Naive thymus-derived CD4-positive, alpha-beta T cell (primary cell): ENCODE measurements at regions of chr1 and their contacts with region 1.

Region 1: DNA sequence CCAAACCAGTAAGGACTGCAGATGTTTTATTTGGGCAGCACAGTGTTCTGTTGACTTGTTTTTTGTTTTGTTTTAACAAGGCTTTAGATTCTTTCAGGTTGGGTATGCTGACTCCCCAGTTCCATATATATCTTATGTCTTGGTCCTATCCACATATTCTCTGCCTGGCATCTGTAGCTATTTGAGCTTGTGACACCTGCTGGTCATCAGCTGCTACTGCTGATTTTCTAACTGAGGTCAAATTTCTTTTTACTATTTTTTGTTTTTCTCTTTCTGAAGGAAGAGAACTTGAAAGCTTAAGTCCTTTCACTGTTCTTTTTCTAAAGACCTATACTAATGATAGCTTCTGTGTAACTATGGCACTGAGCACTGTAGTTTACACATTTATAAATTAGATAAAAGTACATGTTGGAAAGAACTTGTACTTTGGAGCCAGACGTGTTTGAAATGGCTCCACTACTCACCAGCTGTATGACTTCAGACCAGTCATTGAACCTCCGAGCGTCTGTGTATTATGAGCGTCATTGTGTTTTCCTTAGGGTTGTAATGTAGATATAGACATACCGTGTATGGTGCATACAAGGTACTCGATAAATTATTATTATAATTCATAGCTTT is 109.4 kb downstream of the NRDC start:
- DNase-seq: peak in 7 of 9 donors; percentile 10 to 52 (median 33)
- ATAC-seq: peak; percentile 83
- H3K4me3 ChIP-seq: no peak overlapping the region
- H3K4me3 Mint-ChIP-seq: no peak overlapping the region
- H3K27ac ChIP-seq: no peak overlapping the region
- H3K27ac Mint-ChIP-seq: peak overlapping the region in 4 of 9 donors; percentile 18 to 65 (median 52)
- H3K4me1 ChIP-seq: no peaks in the 10 kb centered on the region
- H3K4me1 Mint-ChIP-seq: peaks cover 3 to 18% (median 6%) of the 10 kb centered on the region in 7 donors
- H3K27me3 ChIP-seq: no peaks in the 10 kb centered on the region
- H3K27me3 Mint-ChIP-seq: no peaks in the 10 kb centered on the region

Region 2: DNA sequence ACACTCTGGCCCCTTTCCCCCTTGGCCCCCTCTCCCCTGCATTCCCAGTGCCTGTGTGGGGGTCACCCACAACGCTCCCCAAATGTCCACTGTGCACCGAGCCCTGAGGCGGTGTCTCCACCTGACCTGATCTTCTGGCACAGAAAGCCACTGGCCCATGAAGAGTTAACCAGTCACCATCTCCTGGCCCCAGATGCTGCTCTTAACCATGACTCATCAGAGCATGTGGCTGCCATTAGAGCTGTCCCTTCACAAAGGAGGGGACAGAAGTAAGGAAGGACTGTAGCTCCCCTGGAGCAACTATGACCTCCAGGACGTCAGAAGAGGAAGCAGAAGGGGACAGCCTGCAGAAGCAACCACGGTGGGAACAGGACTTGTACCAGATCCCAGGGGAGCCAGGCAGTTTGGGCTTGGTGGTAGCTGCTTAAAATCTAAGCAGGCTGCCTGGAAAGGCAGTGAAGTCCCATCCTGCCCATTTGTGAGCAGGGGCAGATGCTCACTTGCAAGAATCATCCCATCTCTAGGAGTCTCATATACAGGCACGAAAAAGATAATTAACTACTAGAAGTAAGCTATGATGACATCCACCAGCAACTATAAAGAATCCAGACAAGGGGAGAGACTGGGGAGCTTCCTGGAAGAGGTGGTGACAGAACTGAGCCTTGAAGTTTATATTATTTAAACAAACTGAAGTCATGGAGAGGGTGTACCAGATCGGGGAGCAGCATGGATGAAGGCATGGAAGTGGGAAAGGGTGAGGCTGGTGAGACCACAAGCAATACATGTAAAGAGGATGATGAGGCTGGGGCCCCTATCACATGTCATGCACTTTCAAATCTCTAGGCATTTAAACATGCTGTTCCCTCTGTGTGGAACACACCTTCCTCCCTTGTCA is 437.6 kb before region 1 on chr1:
- CTCF ChIA-PET with region 1: no interaction called
- POLR2A ChIA-PET with region 1: no interaction called
- intact Hi-C with region 1: loop called in 1 of 2 experiments (anchors 10 kb)
- DNase-seq: no peak
- ATAC-seq: peak; percentile 68
- H3K4me3 ChIP-seq: no peak overlapping the region
- H3K4me3 Mint-ChIP-seq: peak overlapping the region; percentile 31 to 85 (median 66)
- H3K27ac ChIP-seq: no peak overlapping the region
- H3K27ac Mint-ChIP-seq: no peak overlapping the region
- H3K4me1 ChIP-seq: no peaks in the 10 kb centered on the region
- H3K4me1 Mint-ChIP-seq: peaks cover 0 to 9% (median 5%) of the 10 kb centered on the region in 7 donors
- H3K27me3 ChIP-seq: peaks cover 5 to 11% of the 10 kb centered on the region in 2 donors
- H3K27me3 Mint-ChIP-seq: peaks cover 23 to 37% (median 30%) of the 10 kb centered on the region in 5 donors

Region 3: DNA sequence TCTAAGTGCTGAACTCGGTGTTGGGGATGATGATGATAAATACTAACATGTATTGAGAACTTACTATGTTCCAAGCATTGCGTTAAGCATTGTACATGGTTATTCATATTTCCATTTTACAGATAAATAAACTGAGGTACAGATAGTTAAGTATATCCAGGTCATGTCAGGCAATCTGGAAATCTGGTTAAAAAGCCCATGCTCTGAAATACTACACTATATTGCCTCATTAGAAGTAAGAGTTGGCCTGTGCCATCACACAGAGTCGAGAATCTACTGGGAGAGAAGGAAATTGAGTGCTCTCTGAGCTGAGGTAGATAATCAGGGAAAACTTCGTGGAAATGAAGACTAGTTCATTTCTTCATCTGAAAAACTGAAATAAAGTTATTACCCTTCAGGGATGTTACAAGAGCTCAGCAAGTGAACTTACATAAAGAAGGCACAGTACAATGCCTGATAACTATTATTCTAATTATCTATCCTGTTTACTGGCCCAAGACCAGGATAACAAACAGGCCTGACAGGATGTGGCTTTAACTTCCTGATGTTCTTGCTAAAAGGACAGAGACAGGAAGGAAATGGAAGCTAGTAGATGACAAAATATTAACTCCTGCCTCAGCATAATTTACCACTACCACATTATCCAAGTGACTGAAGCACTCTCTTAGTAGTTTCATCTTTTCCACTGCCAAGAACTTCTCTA is 335.7 kb before region 1 on chr1:
- CTCF ChIA-PET with region 1: no interaction called
- POLR2A ChIA-PET with region 1: no interaction called
- intact Hi-C with region 1: loop called in 1 of 2 experiments (anchors 10 kb)
- DNase-seq: no peak
- ATAC-seq: no peak
- H3K4me3 ChIP-seq: no peak overlapping the region
- H3K4me3 Mint-ChIP-seq: peak overlapping the region in 5 of 10 donors; percentile 34 to 58 (median 55)
- H3K27ac ChIP-seq: no peak overlapping the region
- H3K27ac Mint-ChIP-seq: peak overlapping the region; percentile 7 to 75 (median 29)
- H3K4me1 ChIP-seq: peaks cover 20 to 23% of the 10 kb centered on the region in 2 donors
- H3K4me1 Mint-ChIP-seq: peaks cover 23 to 50% (median 28%) of the 10 kb centered on the region in 7 donors
- H3K27me3 ChIP-seq: no peaks in the 10 kb centered on the region
- H3K27me3 Mint-ChIP-seq: no peaks in the 10 kb centered on the region

Region 4: DNA sequence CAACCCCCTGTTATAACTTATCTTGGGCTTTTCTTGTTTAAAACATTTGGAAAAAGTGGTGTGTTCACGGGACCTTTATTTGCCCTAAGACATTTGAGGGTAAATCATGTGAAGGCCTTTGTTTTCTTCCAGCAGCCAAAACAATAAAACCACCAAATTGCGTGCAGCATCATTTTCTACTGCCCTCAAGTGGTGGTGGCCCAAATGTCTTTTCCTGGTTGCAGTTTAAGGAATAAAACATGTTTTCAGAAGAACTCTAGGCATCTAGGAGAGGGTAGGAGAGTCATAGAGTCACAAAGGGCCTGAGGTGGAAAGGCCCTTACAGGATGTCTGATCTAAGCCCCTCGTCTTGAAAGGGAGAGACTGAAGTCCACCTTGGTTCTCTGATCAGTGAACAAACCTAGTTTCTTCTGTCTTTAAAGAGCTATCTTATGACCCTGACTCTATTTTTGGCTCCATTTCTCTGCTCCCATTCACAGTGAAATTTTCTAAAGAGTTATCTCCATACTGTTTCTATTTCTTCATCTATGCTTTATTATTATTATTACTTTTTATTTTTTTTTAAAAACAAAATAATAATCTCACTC is 234.0 kb before region 1 on chr1:
- CTCF ChIA-PET with region 1: no interaction called
- POLR2A ChIA-PET with region 1: no interaction called
- intact Hi-C with region 1: loop called in 1 of 2 experiments (anchors 10 kb)
- DNase-seq: peak in 6 of 9 donors; percentile 11 to 34 (median 25)
- ATAC-seq: peak; percentile 60
- H3K4me3 ChIP-seq: no peak overlapping the region
- H3K4me3 Mint-ChIP-seq: no peak overlapping the region
- H3K27ac ChIP-seq: no peak overlapping the region
- H3K27ac Mint-ChIP-seq: peak overlapping the region in 5 of 9 donors; percentile 8 to 84 (median 25)
- H3K4me1 ChIP-seq: peaks cover 0 to 8% of the 10 kb centered on the region in 2 donors
- H3K4me1 Mint-ChIP-seq: peaks cover 0 to 10% (median 2%) of the 10 kb centered on the region in 7 donors
- H3K27me3 ChIP-seq: no peaks in the 10 kb centered on the region
- H3K27me3 Mint-ChIP-seq: no peaks in the 10 kb centered on the region

Region 5: GRCh38 chr1:51569284-51570062 is 199.6 kb before region 1 on chr1:
- CTCF ChIA-PET with region 1: no interaction called
- POLR2A ChIA-PET with region 1: no interaction called
- intact Hi-C with region 1: loop called in 1 of 2 experiments (anchors 1 kb)
- DNase-seq: peak in 7 of 9 donors; percentile 11 to 37 (median 28)
- ATAC-seq: peak; percentile 71
- H3K4me3 ChIP-seq: peak overlapping the region; percentile 3
- H3K4me3 Mint-ChIP-seq: peak overlapping the region in 9 of 10 donors; percentile 31 to 71 (median 61)
- H3K27ac ChIP-seq: peak overlapping the region; percentile 48
- H3K27ac Mint-ChIP-seq: peak overlapping the region; percentile 67 to 92 (median 83)
- H3K4me1 ChIP-seq: peaks cover 22 to 24% of the 10 kb centered on the region in 2 donors
- H3K4me1 Mint-ChIP-seq: peaks cover 18 to 37% (median 28%) of the 10 kb centered on the region in 7 donors
- H3K27me3 ChIP-seq: no peaks in the 10 kb centered on the region
- H3K27me3 Mint-ChIP-seq: no peaks in the 10 kb centered on the region

Region 6: GRCh38 chr1:51627678-51628077 is 141.4 kb before region 1 on chr1:
- CTCF ChIA-PET with region 1: interaction called, 6 read pairs
- POLR2A ChIA-PET with region 1: no interaction called
- intact Hi-C with region 1: loop called (anchors 1 kb)
- DNase-seq: peak in 3 of 9 donors; percentile 9 to 18 (median 14)
- ATAC-seq: no peak
- H3K4me3 ChIP-seq: no peak overlapping the region
- H3K4me3 Mint-ChIP-seq: no peak overlapping the region
- H3K27ac ChIP-seq: no peak overlapping the region
- H3K27ac Mint-ChIP-seq: peak overlapping the region in 1 of 9 donors; percentile 22
- H3K4me1 ChIP-seq: no peaks in the 10 kb centered on the region
- H3K4me1 Mint-ChIP-seq: peaks cover 9 to 57% (median 46%) of the 10 kb centered on the region in 7 donors
- H3K27me3 ChIP-seq: no peaks in the 10 kb centered on the region
- H3K27me3 Mint-ChIP-seq: no peaks in the 10 kb centered on the region

Region 7: GRCh38 chr1:51729156-51729823 is 39.8 kb before region 1 on chr1:
- CTCF ChIA-PET with region 1: interaction called, 4 read pairs
- POLR2A ChIA-PET with region 1: interaction called, 3 read pairs
- intact Hi-C with region 1: loop called in 1 of 2 experiments (anchors 1 kb)
- DNase-seq: peak; percentile 73 to 95 (median 88)
- ATAC-seq: peak; percentile 96
- H3K4me3 ChIP-seq: peak overlapping the region; percentile 87
- H3K4me3 Mint-ChIP-seq: peak overlapping the region; percentile 88 to 94 (median 92)
- H3K27ac ChIP-seq: peak overlapping the region; percentile 78
- H3K27ac Mint-ChIP-seq: peak overlapping the region; percentile 77 to 93 (median 89)
- H3K4me1 ChIP-seq: peaks cover 11 to 19% of the 10 kb centered on the region in 2 donors
- H3K4me1 Mint-ChIP-seq: peaks cover 17 to 56% (median 48%) of the 10 kb centered on the region in 7 donors
- H3K27me3 ChIP-seq: no peaks in the 10 kb centered on the region
- H3K27me3 Mint-ChIP-seq: no peaks in the 10 kb centered on the region

Region 8: DNA sequence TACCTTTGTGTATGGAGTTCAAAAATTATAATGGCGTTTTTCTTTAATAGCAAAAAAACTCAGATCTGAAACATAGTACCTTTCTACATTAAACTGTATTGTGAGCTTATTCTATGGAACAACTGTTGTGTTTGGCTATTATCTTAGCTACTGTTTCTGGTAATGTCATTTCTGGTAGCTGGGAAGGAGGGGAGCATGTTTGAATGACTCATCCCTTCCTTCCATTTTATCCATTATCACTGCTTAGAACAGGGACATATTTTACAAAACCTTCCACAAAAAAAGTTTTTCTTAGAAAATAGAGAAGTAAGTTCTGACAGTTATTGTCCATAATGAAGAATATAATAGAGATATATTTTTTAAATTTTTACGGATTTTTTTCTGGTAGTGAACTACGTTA is 18.9 kb before region 1 on chr1:
- CTCF ChIA-PET with region 1: no interaction called
- POLR2A ChIA-PET with region 1: no interaction called
- intact Hi-C with region 1: no loop called
- DNase-seq: no peak
- ATAC-seq: no peak
- H3K4me3 ChIP-seq: no peak overlapping the region
- H3K4me3 Mint-ChIP-seq: no peak overlapping the region
- H3K27ac ChIP-seq: no peak overlapping the region
- H3K27ac Mint-ChIP-seq: no peak overlapping the region
- H3K4me1 ChIP-seq: no peaks in the 10 kb centered on the region
- H3K4me1 Mint-ChIP-seq: peaks cover 0 to 9% (median under 1%) of the 10 kb centered on the region in 7 donors
- H3K27me3 ChIP-seq: no peaks in the 10 kb centered on the region
- H3K27me3 Mint-ChIP-seq: no peaks in the 10 kb centered on the region